ENCODE measurements at regions of chr7 and their contacts with region 1.

Region 1: GRCh38 chr7:24979863-24980533 is at the start of gene OSBPL3:
- DNase-seq: peak; percentile 96
- ATAC-seq: peak; percentile 66
- H3K4me3 ChIP-seq: peak within 1 kb of the TSS; percentile 72
- H3K27ac ChIP-seq: peak within 1 kb of the TSS; percentile 62
- H3K4me1 ChIP-seq: peaks cover 18% of the 10 kb centered on the region
- H3K27me3 ChIP-seq: no peaks in the 10 kb centered on the region
- CTCF ChIP-seq: no peak
- total RNA-seq, gene OSBPL3: 10.5 and 11.6 TPM in 2 replicates

Region 2: GRCh38 chr7:24812310-24812945 is 167.6 kb before region 1 on chr7:
- CTCF ChIA-PET with region 1: interaction called, 17 read pairs
- POLR2A ChIA-PET with region 1: no interaction called
- intact Hi-C with region 1: no loop called
- DNase-seq: peak; percentile 67
- ATAC-seq: peak; percentile 93
- H3K4me3 ChIP-seq: no peak overlapping the region
- H3K27ac ChIP-seq: no peak overlapping the region
- H3K4me1 ChIP-seq: no peaks in the 10 kb centered on the region
- H3K27me3 ChIP-seq: no peaks in the 10 kb centered on the region
- CTCF ChIP-seq: peak; percentile 90

Region 3: DNA sequence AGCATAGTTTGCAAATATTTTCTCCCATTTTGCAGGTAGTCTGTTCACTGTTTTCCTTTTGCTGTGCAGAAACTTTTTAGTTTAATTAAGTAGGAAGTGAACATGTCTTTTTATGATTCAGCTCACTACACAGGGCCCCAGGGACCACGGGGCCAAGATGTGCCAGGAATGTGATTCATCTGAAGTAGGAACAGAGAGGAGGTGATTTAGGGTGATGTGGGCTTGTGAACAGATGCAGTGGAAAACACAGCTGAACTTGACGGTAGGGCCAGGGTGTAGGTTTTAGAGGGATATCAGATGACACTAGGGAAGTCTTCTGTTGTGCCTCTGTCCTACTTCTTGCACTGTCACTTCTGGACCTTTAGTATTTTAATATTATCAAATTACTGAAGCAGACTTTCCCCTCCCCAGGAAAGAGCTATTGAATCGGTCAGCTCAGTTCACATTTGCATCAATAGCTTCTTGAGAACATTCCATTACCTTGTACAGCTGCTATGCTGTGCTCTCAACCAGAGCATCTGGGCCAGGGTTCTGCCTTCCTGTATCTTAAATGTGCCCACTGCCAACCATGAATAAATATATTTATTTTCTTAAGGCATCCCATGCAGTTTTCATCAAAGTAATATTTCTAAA is 96.9 kb before region 1 on chr7:
- CTCF ChIA-PET with region 1: no interaction called
- POLR2A ChIA-PET with region 1: interaction called, 3 read pairs
- intact Hi-C with region 1: loop called (anchors 5 kb)
- DNase-seq: peak; percentile 66
- ATAC-seq: peak; percentile 95
- H3K4me3 ChIP-seq: no peak overlapping the region
- H3K27ac ChIP-seq: no peak overlapping the region
- H3K4me1 ChIP-seq: peaks cover 16% of the 10 kb centered on the region
- H3K27me3 ChIP-seq: no peaks in the 10 kb centered on the region
- CTCF ChIP-seq: no peak

Region 4: GRCh38 chr7:24926623-24927524 is 53.1 kb before region 1 on chr7:
- CTCF ChIA-PET with region 1: interaction called, 3 read pairs
- POLR2A ChIA-PET with region 1: no interaction called
- intact Hi-C with region 1: loop called (anchors 1 kb)
- DNase-seq: peak; percentile 8
- ATAC-seq: peak; percentile 63
- H3K4me3 ChIP-seq: no peak overlapping the region
- H3K27ac ChIP-seq: peak overlapping the region; percentile 41; the same call in 1 of the 2 replicates
- H3K4me1 ChIP-seq: peaks cover 31% of the 10 kb centered on the region
- H3K27me3 ChIP-seq: no peaks in the 10 kb centered on the region
- CTCF ChIP-seq: no peak

Region 5: GRCh38 chr7:24959735-24960485 is 20.1 kb before region 1 on chr7:
- CTCF ChIA-PET with region 1: no interaction called
- POLR2A ChIA-PET with region 1: no interaction called
- intact Hi-C with region 1: no loop called
- DNase-seq: no peak
- ATAC-seq: no peak
- H3K4me3 ChIP-seq: no peak overlapping the region
- H3K27ac ChIP-seq: no peak overlapping the region
- H3K4me1 ChIP-seq: peaks cover 15% of the 10 kb centered on the region
- H3K27me3 ChIP-seq: no peaks in the 10 kb centered on the region
- CTCF ChIP-seq: no peak

Region 6: DNA sequence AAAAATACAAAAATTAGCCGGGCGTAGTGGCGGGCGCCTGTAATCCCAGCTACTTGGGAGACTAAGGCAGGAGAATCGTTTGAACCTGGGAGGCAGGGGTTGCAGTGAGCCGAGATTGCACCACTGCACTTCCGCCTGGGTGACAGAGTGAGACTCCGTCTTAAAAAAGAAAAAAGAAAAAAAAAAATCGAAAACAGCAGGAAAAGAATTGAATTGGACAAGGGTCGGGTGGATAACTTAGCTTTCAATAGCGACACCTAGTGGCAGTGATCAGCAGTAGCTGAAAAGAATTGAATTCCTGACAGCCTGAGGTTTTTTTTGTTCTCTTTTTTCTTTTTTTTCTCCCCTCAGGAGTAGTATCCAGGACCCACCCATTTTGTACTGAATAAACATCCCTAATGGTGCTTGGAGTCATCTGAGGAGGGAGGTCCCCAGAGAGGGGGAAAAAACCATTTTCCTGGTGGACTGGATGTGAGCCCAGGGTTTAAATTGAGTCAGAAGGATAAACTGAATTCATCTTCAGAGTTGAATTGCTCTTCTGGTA is 90.0 kb after region 1 on chr7:
- CTCF ChIA-PET with region 1: interaction called, 7 read pairs
- POLR2A ChIA-PET with region 1: no interaction called
- intact Hi-C with region 1: loop called (anchors 1 kb)
- DNase-seq: peak; percentile 87
- ATAC-seq: peak; percentile 76
- H3K4me3 ChIP-seq: peak overlapping the region; percentile 40
- H3K27ac ChIP-seq: no peak overlapping the region
- H3K4me1 ChIP-seq: peaks cover 13% of the 10 kb centered on the region
- H3K27me3 ChIP-seq: no peaks in the 10 kb centered on the region
- CTCF ChIP-seq: peak; percentile 80

Region 7: GRCh38 chr7:25125137-25125946 is 145.3 kb after region 1 on chr7 and contains the start of gene CYCS:
- CTCF ChIA-PET with region 1: interaction called, 7 read pairs
- POLR2A ChIA-PET with region 1: interaction called, 17 read pairs
- intact Hi-C with region 1: no loop called
- DNase-seq: peak; percentile 100
- ATAC-seq: peak; percentile 92
- H3K4me3 ChIP-seq: peak within 1 kb of the TSS; percentile 100
- H3K27ac ChIP-seq: peak within 1 kb of the TSS; percentile 39; the same call in 1 of the 2 replicates
- H3K4me1 ChIP-seq: 0 out of 2 replicates have a peak, but pooled peaks cover 10% of the 10 kb centered on the region
- H3K27me3 ChIP-seq: no peaks in the 10 kb centered on the region
- CTCF ChIP-seq: no peak
- total RNA-seq, gene CYCS: 85.4 and 101 TPM in 2 replicates